Prostate gland (tissue), 2 donors: ENCODE measurements at regions of chr6 and their contacts with region 1.

Region 1: DNA sequence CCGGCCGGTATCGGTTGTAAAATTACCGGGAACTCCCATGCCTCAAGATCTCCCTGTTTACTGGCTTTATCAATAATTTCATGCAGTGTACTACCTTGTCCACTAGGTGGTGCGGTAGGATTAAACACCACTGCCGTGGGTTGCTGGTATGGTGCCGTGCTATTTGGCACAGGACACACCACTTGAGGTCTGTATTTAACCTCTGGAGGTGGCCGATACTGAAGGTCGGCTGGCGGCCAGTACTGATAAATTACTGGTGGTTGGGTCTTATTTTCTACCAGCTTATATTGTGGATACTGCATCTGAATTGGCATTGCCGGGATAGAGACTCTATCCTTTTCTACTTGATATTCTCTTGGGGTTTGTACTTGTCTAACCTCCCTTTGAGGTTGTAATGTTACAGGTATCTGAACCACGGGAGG is 14.3 kb upstream of the PTCRA start:
- DNase-seq: peak; percentile 84
- H3K4me3 ChIP-seq: no peak overlapping the region
- H3K27ac ChIP-seq: peak overlapping the region; percentile 75 to 88
- H3K4me1 ChIP-seq: peaks cover 6% of the 10 kb centered on the region
- H3K27me3 ChIP-seq: no peaks in the 10 kb centered on the region
- CTCF ChIP-seq: peak; percentile 73 to 98 (median 96)
- POLR2A ChIP-seq: no peak

Region 2: GRCh38 chr6:42984001-42984923 is 82.7 kb after region 1 on chr6 and contains the start of gene PPP2R5D:
- intact Hi-C with region 1: loop called (anchors 5 kb)
- DNase-seq: peak; percentile 98
- H3K4me3 ChIP-seq: peak within 1 kb of the TSS; percentile 77 to 87
- H3K27ac ChIP-seq: peak within 1 kb of the TSS; percentile 81 to 82
- H3K4me1 ChIP-seq: peaks cover 14% of the 10 kb centered on the region
- H3K27me3 ChIP-seq: no peaks in the 10 kb centered on the region
- CTCF ChIP-seq: peak in 3 of 4 experiments; percentile 14 to 64 (median 36)
- POLR2A ChIP-seq: peak; percentile 93
- total RNA-seq, gene PPP2R5D: 55.1 to 95.9 TPM

Region 3: GRCh38 chr6:43070028-43070632 is 168.6 kb after region 1 on chr6:
- intact Hi-C with region 1: no loop called
- DNase-seq: no peak
- H3K4me3 ChIP-seq: no peak overlapping the region
- H3K27ac ChIP-seq: no peak overlapping the region
- H3K4me1 ChIP-seq: no peaks in the 10 kb centered on the region
- H3K27me3 ChIP-seq: no peaks in the 10 kb centered on the region
- CTCF ChIP-seq: peak; percentile 10 to 49 (median 38)
- POLR2A ChIP-seq: no peak

Region 4: DNA sequence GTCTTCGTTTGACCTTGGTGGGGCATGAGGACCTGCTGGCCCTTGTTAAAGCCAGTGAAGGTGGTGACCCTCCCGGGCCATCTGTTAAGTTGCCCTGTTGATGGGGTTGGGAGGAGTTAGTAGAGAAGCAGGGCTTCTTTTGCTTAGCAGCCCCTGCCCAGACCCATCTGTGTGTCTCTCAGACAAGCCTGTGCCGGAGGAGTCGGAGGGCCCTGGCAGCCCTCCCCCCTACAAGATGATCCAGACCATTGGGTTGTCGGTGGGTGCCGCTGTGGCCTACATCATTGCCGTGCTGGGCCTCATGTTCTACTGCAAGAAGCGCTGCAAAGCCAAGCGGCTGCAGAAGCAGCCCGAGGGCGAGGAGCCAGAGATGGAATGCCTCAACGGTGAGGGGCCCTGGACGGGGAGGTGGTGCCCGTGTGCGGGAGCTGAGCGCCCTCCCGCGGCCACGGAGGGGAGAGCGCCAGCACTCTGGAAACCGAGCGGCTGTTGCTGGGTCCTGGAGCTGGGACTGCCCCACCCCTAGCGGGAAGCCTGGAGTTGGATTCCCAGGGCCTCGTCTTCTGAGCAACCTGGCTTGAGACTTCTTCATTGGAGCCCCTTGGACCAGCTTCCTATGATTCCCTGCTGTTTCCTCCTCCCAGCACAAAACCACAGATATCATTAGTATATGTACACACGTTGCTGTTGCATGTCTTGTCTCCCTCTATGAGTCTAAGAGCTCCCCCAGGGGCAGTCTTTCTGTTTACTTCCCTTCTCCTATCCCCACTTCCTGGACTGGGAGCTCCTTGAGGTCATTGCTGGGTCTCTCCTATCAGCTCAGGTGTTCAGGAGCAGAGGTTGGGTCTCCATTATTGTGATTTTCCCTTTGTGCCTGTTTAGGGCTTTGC is 241.9 kb after region 1 on chr6:
- intact Hi-C with region 1: loop called (anchors 2 kb)
- DNase-seq: peak; percentile 86
- H3K4me3 ChIP-seq: no peak overlapping the region
- H3K27ac ChIP-seq: peak overlapping the region; percentile 7 to 38
- H3K4me1 ChIP-seq: peaks cover 5% of the 10 kb centered on the region
- H3K27me3 ChIP-seq: no peaks in the 10 kb centered on the region
- CTCF ChIP-seq: peak; percentile 76 to 98 (median 92)
- POLR2A ChIP-seq: no peak

Region 5: DNA sequence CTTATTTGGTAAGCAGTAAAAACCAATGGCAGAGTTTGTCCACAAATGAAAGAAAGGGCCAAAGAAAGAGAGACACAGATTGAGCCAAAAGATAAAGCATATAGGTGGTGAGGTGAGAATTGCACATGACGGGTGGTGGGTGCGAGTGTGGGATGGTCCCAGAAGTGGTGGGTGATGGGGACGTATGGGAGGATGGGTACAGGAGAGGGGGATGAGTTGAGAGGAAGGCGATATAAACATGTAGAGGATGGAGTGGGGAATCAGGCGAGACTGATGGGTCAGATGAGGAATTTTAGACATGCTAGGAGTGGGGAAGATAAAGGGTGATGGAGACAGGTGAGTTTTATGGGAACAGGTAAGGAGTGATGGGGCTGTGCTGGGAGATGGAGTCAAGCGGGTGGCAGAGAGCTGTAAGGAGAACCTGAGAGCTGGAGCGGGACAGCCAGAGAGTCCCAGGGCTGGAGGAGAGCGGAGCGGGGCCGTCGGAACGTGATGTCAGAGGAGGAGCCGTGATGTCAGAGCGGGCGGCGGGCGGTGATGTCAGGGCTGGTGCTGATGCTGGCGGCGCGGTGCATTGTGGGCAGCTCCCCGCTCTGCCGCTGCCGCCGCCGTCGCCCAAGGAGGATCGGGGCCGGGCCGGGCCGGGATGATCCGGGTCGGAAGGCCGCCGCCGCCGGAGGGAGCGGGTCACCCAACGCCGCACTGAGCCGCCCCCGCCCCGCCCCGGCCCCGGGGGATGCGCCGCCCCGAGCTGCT is 341.5 kb after region 1 on chr6 and contains the start of gene TTBK1:
- intact Hi-C with region 1: no loop called
- DNase-seq: no peak
- H3K4me3 ChIP-seq: no peak within 1 kb of the TSS
- H3K27ac ChIP-seq: no peak within 1 kb of the TSS
- H3K4me1 ChIP-seq: no peaks in the 10 kb centered on the region
- H3K27me3 ChIP-seq: peaks cover 5% of the 10 kb centered on the region
- CTCF ChIP-seq: no peak
- POLR2A ChIP-seq: no peak
- total RNA-seq, gene TTBK1: 0.18 to 0.62 TPM